ENCODE measurements at regions of chr19 and their contacts with region 1.

Region 1: DNA sequence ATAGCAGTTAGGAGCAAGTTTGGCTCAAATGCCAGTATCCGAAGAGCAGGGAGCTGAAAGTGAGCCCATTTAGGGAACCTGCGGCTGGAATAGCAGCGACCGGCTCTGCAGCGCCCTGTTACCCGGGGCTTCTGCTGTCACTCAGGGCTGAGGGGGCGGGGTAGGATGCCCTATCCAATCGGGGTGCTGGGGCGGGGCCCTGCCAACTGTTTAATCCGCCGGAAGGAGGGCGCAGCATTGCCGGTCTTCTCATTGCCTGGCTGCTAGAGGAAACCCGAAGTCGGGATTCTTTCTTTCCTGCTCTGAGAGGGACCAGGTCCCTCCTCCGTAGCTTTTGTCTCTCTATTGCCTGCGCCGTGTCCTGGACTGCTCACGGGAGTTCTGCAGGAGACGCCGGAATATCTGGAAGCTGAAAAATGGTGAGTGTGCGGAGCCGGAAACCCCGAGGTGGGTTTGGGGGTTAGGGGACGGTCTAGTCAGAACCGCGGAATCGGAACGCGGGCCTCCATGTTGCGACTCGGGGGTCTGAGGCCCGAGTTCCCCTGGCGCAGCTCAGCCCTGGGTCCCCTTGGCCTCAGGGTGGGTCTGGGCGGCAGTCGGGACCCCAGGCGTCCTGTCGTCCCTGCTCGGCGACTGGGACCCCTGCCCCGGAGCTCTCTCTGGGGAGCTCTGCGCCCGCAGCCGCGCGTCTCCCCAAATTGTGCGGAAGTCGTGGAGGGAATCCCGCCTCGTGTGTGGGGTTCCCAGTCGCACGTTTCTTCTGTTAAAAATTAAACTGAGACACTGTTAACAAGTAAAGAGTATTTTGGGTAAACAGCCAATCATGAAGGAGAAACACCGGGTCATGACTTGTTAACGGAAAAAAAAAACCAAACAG is 22.8 kb downstream of the ZNF763 start:
- DNase-seq: peak; percentile 99
- H3K4me3 ChIP-seq: peak overlapping the region; percentile 88 to 91 (median 90)
- H3K27ac ChIP-seq: peak overlapping the region; percentile 74 to 89 (median 87)
- H3K4me1 ChIP-seq: no peaks in the 10 kb centered on the region
- H3K27me3 ChIP-seq: no peaks in the 10 kb centered on the region
- CTCF ChIP-seq: no peak
- POLR2A ChIP-seq: peak in 1 of 2 donors; percentile 93

Region 2: GRCh38 chr19:11798391-11799330 is 189.0 kb before region 1 on chr19 and contains the start of gene ZNF491:
- intact Hi-C with region 1: loop called (anchors 10 kb)
- DNase-seq: peak; percentile 97 to 98
- H3K4me3 ChIP-seq: peak within 1 kb of the TSS; percentile 71 to 85 (median 82)
- H3K27ac ChIP-seq: peak within 1 kb of the TSS; percentile 49 to 86 (median 58)
- H3K4me1 ChIP-seq: peaks cover 8 to 15% of the 10 kb centered on the region in 2 donors
- H3K27me3 ChIP-seq: no peaks in the 10 kb centered on the region
- CTCF ChIP-seq: peak in 1 of 6 experiments; percentile 12
- POLR2A ChIP-seq: peak in 1 of 2 donors; percentile 94
- total RNA-seq, gene ZNF491: 2.9 to 3.2 (median 3.1) TPM

Region 3: DNA sequence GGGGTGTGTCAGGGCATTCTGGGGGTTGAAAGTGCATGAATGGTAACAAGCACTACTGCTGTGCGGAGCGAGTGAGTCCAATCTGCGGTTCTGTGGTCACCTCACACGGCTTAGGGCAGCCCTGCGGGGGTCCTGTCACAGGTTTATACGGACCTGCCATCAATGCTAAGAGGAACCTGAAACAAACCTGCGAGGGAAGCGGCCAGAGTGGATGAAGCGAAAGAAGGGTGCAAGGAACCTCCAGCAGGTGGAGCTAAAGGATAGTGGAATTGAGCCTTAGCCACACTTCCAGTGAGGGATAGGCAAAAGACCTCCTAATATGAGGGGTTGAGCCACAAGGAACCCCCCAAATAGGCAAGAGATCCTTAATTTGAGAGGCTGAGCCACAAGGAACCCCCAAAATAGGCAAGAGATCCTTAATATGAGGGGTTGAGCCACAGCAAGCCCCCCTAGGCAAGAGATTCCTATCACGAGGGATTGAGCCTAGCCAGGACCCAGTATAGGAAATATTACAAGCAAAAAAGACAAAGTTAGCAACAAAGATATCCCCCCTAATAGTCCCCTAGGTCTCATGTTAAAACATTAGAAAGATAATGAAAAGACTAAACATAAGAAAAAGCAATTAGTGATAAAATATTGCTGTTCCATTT is 106.4 kb before region 1 on chr19:
- intact Hi-C with region 1: loop called (anchors 5 kb)
- DNase-seq: peak; percentile 64 to 66
- H3K4me3 ChIP-seq: no peak overlapping the region
- H3K27ac ChIP-seq: no peak overlapping the region
- H3K4me1 ChIP-seq: no peaks in the 10 kb centered on the region
- H3K27me3 ChIP-seq: no peaks in the 10 kb centered on the region
- CTCF ChIP-seq: peak; percentile 49 to 80 (median 68)
- POLR2A ChIP-seq: no peak

Region 4: DNA sequence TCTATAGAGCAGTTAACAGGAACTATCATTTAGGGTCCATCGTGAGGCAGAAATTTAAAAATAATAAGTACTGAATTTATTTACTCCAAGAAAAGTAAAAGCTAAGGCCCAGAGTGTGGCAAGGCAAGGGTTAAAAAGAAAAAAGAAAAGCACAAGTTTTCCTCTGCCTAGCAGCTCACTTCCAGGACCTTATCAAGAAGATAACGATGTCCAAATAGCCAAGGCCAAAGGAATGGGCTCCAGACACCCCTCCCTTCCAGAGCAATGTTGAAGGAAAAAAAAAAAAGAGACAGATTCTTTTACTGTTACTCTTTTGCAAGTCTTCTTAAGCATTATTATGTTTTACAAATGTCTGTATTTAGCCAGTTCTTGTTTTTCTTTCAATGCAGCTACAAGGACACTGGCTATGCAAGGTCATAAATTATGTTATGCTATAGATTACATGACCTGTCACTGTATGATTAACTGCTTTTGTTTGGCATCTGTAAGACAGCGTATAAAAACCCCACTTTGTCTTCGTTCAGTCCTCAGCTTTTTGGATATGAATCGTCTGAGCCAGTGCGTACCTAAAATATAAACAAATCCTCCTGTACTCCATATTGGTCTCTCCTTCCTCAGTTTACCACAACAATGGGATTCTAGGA is 65.7 kb before region 1 on chr19:
- intact Hi-C with region 1: loop called (anchors 2 kb)
- DNase-seq: no peak
- H3K4me3 ChIP-seq: no peak overlapping the region
- H3K27ac ChIP-seq: no peak overlapping the region
- H3K4me1 ChIP-seq: peaks cover 5 to 21% of the 10 kb centered on the region in 2 donors
- H3K27me3 ChIP-seq: no peaks in the 10 kb centered on the region
- CTCF ChIP-seq: no peak
- POLR2A ChIP-seq: no peak

Region 5: GRCh38 chr19:11964858-11965645 is 22.6 kb before region 1 on chr19 and contains the start of gene ZNF763:
- intact Hi-C with region 1: loop called (anchors 2 kb)
- DNase-seq: peak; percentile 98 to 99
- H3K4me3 ChIP-seq: peak within 1 kb of the TSS; percentile 45 to 70 (median 65)
- H3K27ac ChIP-seq: peak within 1 kb of the TSS; percentile 74 to 99 (median 93)
- H3K4me1 ChIP-seq: peaks cover 6 to 24% of the 10 kb centered on the region in 2 donors
- H3K27me3 ChIP-seq: no peaks in the 10 kb centered on the region
- CTCF ChIP-seq: no peak
- POLR2A ChIP-seq: peak in 1 of 2 donors; percentile 87
- total RNA-seq, gene ZNF763: 7.4 to 14.4 (median 10.3) TPM

Measured in thyroid gland (tissue), 4 donors.